Activated naive CD4-positive, alpha-beta T cell treated with anti-CD3 and anti-CD28 coated beads for 36 hours (primary cell): ENCODE measurements at regions of chr3 and their contacts with region 1.

Region 1: DNA sequence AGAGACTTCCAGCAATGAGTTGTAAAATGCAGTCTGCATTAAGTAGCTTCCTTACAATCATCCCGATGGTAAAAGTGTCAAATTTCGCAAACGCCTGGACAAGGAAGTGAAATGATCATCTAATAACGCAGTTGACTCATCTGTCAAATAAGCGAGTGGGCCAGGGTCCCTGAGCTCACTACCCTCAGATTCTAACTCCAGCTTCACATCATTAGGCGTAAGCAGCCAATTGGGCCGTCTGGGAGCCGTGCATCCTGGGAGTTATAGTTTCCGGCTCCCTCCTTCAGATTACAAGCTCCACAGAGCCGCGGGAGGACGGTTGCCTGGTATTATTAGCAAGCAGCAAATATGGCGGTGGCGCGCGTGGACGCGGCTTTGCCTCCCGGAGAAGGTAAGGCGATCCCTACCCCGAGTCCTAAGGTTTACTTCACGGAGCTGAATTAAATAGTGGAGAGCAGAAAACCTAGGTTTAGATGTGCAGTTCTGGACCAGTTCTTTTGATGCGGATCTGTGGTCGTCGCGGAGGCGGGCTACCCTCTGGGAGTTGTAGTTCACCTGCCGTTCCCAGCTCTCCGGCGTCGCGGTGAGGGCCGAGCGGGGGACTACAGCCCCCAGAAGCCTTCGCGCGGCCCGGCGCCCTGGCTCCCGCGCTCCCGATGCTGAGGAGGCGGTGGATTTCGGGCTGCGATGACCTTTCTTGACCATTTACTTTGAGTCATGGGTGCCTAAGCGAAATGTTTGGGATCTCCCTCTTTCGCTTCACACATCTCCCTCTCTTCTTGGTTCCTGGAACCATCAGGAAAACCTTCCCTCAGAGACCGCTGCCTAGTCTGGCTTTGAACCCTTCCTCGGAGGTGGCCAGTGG is at the start of gene CEP97:
- DNase-seq: peak; percentile 94
- H3K4me3 Mint-ChIP-seq: peak within 1 kb of the TSS; percentile 97
- H3K27ac Mint-ChIP-seq: peak within 1 kb of the TSS; percentile 97
- H3K4me1 Mint-ChIP-seq: peaks cover 33% of the 10 kb centered on the region
- H3K27me3 Mint-ChIP-seq: no peaks in the 10 kb centered on the region
- total RNA-seq, gene CEP97: 17.0 to 20.3 TPM

Region 2: DNA sequence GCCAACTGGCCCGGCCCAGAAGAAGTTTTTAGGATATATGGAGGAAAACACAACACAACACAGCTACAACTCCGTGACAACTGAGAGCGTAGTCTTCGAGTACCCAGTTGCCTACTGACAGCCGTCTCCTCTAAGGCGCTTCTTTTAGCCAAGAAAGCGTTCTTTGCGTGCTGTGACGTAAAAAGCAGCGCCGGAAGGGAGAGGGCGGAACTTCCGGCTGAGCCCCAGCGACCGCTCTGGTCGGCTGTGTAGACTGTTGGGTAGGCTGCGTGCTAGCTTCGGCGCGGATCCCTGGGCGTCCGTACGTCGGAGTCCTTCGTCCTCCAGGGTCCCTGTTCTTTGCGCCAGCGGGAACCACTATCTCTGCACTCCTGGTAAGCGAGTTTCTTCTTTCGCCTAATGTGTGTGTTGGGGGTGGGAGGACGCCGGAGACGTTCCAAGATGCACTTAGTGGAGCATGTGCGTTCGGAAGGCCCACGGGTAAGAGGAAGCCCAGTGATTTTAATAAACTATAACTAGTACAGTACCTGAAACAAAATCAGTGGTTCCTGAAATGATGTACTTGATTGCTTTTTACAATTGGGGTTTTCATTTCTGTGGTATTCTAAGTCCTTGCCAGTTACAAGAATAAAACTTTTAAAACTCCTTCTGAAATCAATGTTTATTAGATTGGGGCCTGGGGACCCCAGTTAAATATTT is 162.8 kb before region 1 on chr3 and contains the start of gene TRMT10C:
- CTCF ChIA-PET with region 1: no interaction called
- intact Hi-C with region 1: loop called (anchors 1 kb)
- DNase-seq: peak; percentile 96
- H3K4me3 Mint-ChIP-seq: peak within 1 kb of the TSS; percentile 97
- H3K27ac Mint-ChIP-seq: peak within 1 kb of the TSS; percentile 94
- H3K4me1 Mint-ChIP-seq: peaks cover 40% of the 10 kb centered on the region
- H3K27me3 Mint-ChIP-seq: no peaks in the 10 kb centered on the region
- total RNA-seq, gene TRMT10C: 24.0 to 24.4 TPM

Region 3: GRCh38 chr3:101676765-101677435 is 47.7 kb before region 1 on chr3 and contains the start of gene ZBTB11:
- CTCF ChIA-PET with region 1: no interaction called
- intact Hi-C with region 1: loop called (anchors 1 kb)
- DNase-seq: peak; percentile 100
- H3K4me3 Mint-ChIP-seq: peak within 1 kb of the TSS; percentile 87
- H3K27ac Mint-ChIP-seq: peak within 1 kb of the TSS; percentile 95
- H3K4me1 Mint-ChIP-seq: peaks cover 54% of the 10 kb centered on the region
- H3K27me3 Mint-ChIP-seq: no peaks in the 10 kb centered on the region
- total RNA-seq, gene ZBTB11: 31.2 to 31.7 TPM

Region 4: GRCh38 chr3:101695779-101696372 is 28.7 kb before region 1 on chr3:
- CTCF ChIA-PET with region 1: no interaction called
- intact Hi-C with region 1: loop called (anchors 1 kb)
- DNase-seq: peak; percentile 52
- H3K4me3 Mint-ChIP-seq: no peak overlapping the region
- H3K27ac Mint-ChIP-seq: no peak overlapping the region
- H3K4me1 Mint-ChIP-seq: peaks cover 7% of the 10 kb centered on the region
- H3K27me3 Mint-ChIP-seq: no peaks in the 10 kb centered on the region

Region 5: DNA sequence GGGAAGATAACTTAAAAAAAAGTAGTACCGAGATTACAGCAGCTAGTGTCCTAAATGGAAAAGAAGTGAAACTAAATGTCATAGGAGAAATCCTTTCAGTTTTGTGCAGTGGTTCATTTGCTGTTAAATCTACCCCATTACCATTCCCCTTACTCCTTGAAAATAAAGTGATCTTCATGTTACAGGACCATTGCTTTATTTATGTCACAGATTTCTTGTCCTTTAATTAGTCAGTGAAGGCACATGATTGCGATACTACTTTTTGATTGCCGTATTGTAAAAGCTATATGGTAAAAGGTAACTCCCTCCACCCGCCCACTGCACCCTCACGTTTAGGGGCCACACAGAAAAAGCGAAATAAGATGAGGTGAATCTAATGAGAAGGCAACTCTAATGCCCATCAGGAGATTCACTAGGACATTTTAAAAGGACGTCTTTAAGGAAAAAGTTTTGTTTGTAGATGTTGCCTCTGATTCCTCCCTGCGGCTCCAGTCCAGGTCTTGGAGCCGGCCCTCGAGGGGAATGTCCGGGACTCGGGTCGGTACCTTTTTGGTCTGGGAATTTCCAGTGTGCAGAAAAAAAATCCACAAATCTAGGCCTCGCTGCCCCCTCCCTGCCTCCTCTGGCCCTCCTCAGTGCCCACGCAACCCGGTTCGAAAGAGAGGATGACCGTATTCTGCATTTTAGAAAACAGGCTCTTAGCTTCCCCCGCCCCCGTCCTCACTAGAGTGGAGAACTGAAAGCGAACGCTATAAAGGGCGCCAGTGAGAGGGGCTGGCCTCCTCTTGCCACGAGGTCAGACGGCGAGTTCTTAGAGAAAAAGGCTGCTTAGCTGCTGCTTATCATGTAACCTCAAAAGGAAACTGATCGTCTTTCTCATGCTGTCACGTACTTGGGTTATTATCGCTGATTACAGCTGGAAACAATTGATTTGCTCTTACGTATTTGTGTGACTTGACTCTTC is 102.9 kb after region 1 on chr3:
- CTCF ChIA-PET with region 1: no interaction called
- intact Hi-C with region 1: loop called (anchors 1 kb)
- DNase-seq: peak; percentile 94
- H3K4me3 Mint-ChIP-seq: peak overlapping the region; percentile 77
- H3K27ac Mint-ChIP-seq: peak overlapping the region; percentile 94
- H3K4me1 Mint-ChIP-seq: peaks cover 60% of the 10 kb centered on the region
- H3K27me3 Mint-ChIP-seq: no peaks in the 10 kb centered on the region